ENCODE measurements at regions of chr2 and their contacts with region 1.

Region 1: GRCh38 chr2:207926133-207926988 is 99.0 kb downstream of the PLEKHM3 start:
- DNase-seq: peak; percentile 96
- ATAC-seq: peak; percentile 97
- H3K4me3 ChIP-seq: peak overlapping the region in 2 of 3 experiments; percentile 5 to 18; a peak in 2 of 6 replicates
- H3K27ac ChIP-seq: peak overlapping the region; percentile 66
- H3K4me1 ChIP-seq: peaks cover 51% of the 10 kb centered on the region
- H3K27me3 ChIP-seq: no peaks in the 10 kb centered on the region
- CTCF ChIP-seq: no peak
- EP300 ChIP-seq: peak; percentile 53 to 79; a peak in 3 of 4 replicates
- POLR2A ChIP-seq: peak in 1 of 2 experiments; percentile 17; a peak in 1 of 4 replicates
- RAD21 ChIP-seq: no peak; the same call in 1 of the 2 replicates

Region 2: DNA sequence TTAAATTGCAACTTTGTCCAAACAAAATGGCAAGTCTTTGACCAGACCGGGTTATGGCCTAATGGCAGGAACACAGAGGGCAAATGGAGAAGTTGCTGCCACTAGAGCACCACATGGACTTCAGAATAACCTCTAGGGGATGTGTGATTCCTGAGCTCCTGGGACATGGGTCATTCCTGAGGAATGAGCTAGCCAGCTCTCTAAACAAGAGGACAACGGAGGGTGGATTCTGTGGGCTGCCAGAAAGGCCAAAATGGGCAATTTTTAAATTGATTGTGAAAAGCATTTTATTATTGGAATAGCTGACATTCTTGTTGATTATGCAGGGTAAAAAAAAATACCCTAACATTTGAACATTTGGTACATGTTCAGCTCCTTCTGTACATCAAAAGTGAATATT is 46.8 kb before region 1 on chr2:
- CTCF ChIA-PET with region 1: no interaction called
- POLR2A ChIA-PET with region 1: interaction called, 11 read pairs
- in situ Hi-C with region 1: no loop called
- intact Hi-C with region 1: no loop called
- DNase-seq: peak; percentile 80
- ATAC-seq: peak; percentile 95
- H3K4me3 ChIP-seq: no peak overlapping the region
- H3K27ac ChIP-seq: peak overlapping the region; percentile 25
- H3K4me1 ChIP-seq: peaks cover 52% of the 10 kb centered on the region
- H3K27me3 ChIP-seq: no peaks in the 10 kb centered on the region
- CTCF ChIP-seq: peak; percentile 52
- EP300 ChIP-seq: 0 out of 4 replicates have a peak, but pooled peaks of 1 of the 2 experiments have one; percentile 18
- POLR2A ChIP-seq: no peak
- RAD21 ChIP-seq: no peak

Region 3: GRCh38 chr2:207993151-207993763 is 66.9 kb after region 1 on chr2:
- CTCF ChIA-PET with region 1: no interaction called
- POLR2A ChIA-PET with region 1: no interaction called
- in situ Hi-C with region 1: no loop called
- intact Hi-C with region 1: no loop called
- DNase-seq: no peak
- ATAC-seq: no peak
- H3K4me3 ChIP-seq: no peak overlapping the region
- H3K27ac ChIP-seq: no peak overlapping the region
- H3K4me1 ChIP-seq: no peaks in the 10 kb centered on the region
- H3K27me3 ChIP-seq: no peaks in the 10 kb centered on the region
- CTCF ChIP-seq: no peak
- EP300 ChIP-seq: no peak
- POLR2A ChIP-seq: no peak
- RAD21 ChIP-seq: no peak

Measured in HepG2 (cell line).